CD4-positive, alpha-beta T cell (primary cell): ENCODE measurements at regions of chr17 and their contacts with region 1.

Region 1: GRCh38 chr17:8435245-8436168 is at the start of gene NDEL1:
- DNase-seq: peak; percentile 98 to 99 (median 99)
- ATAC-seq: peak; percentile 91
- H3K4me3 ChIP-seq: peak within 1 kb of the TSS; percentile 78
- H3K4me3 Mint-ChIP-seq: peak within 1 kb of the TSS; percentile 95
- H3K27ac ChIP-seq: peak within 1 kb of the TSS; percentile 97 to 98
- H3K27ac Mint-ChIP-seq: peak within 1 kb of the TSS; percentile 98
- H3K4me1 ChIP-seq: peaks cover 25% of the 10 kb centered on the region
- H3K4me1 Mint-ChIP-seq: peaks cover 44% of the 10 kb centered on the region
- H3K27me3 ChIP-seq: no peaks in the 10 kb centered on the region
- H3K27me3 Mint-ChIP-seq: no peaks in the 10 kb centered on the region
- CTCF ChIP-seq: no peak
- total RNA-seq, gene NDEL1: 300 to 313 TPM

Region 2: DNA sequence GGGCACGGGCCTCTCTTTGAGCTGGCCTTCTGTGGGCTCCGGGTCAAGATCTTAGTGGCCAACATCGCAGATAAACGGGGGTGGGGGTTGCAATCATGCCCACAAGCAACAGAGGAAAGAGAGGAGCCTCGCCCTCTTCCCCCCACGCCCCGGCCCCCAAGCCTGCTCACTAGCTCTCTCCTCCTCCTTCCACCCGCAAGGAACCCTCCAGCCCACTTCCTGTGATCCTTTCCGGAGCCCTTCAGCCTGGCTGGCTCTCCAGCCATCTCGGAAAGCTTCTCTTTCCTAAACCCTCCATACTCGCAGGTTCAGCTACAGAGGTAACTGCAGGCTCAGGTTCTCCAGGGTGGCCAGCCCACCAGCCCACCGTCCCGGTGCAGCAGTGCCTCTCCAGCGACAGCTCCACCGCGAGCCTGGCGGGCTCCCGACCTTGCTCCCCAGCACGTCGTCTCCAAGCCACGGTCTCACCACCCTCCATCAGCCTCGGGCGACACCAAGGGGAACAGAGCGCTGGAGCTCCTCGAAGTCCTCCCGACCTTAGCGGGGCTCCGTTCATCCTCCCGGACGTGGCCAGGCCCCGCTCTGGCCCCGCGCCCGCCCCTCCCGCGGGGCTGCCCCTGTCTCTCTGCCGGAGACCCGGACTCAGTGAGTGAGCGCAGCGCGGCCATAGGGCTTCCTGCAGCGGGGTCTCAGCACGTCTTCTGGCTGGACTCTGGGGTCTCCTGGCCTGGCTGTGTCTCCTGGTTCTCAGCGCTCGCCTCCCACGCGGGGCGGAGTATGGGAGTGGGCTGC is 108.8 kb before region 1 on chr17:
- CTCF ChIA-PET with region 1: no interaction called
- POLR2A ChIA-PET with region 1: no interaction called
- intact Hi-C with region 1: no loop called
- DNase-seq: peak in 11 of 14 experiments; percentile 3 to 49 (median 11)
- ATAC-seq: peak; percentile 58
- H3K4me3 ChIP-seq: peak overlapping the region; percentile 34
- H3K4me3 Mint-ChIP-seq: peak overlapping the region; percentile 45
- H3K27ac ChIP-seq: no peak overlapping the region
- H3K27ac Mint-ChIP-seq: no peak overlapping the region
- H3K4me1 ChIP-seq: peaks cover 15% of the 10 kb centered on the region
- H3K4me1 Mint-ChIP-seq: peaks cover 12% of the 10 kb centered on the region
- H3K27me3 ChIP-seq: peaks cover 34 to 42% of the 10 kb centered on the region in 2 experiments
- H3K27me3 Mint-ChIP-seq: peaks cover 65% of the 10 kb centered on the region
- CTCF ChIP-seq: no peak

Region 3: DNA sequence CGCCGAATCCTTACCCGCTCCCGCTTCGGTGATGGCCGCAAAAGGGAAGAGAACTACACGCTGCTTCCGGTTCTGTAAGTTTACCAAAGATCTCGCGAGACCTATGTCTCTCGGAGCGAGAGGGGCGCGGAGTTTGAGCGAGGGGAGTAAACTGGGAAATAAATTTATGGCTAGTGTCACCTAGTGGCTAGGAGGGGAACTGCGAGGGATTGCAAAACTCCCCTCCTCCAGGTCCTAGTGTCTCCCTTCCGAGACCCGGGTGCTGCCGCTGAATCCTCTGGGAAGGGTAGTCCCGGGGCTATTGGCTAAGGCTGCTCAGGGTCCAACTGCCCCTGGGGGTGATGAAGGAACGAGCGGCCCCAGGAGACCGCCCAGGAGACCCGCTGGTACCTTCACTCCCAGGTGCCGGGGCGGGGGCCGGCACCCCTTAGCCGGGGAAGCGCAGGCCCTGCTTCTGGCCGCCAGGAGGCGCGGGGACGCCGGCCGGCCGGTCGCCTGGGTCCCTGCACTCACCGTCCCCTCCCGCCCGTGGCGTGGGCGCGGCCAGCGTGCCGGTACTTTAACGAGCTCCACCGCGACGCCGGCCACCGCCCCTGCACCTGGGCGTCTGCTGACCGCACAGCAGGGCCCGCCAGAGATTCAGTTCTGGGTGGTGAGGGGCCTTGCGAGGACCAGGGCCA is 52.2 kb before region 1 on chr17 and contains the start of gene RPL26:
- CTCF ChIA-PET with region 1: interaction called, 8 read pairs
- POLR2A ChIA-PET with region 1: interaction called, 20 read pairs
- intact Hi-C with region 1: loop called (anchors 1 kb)
- DNase-seq: peak; percentile 89 to 98 (median 93)
- ATAC-seq: peak; percentile 86
- H3K4me3 ChIP-seq: peak within 1 kb of the TSS; percentile 95
- H3K4me3 Mint-ChIP-seq: peak within 1 kb of the TSS; percentile 95
- H3K27ac ChIP-seq: peak within 1 kb of the TSS; percentile 72 to 76
- H3K27ac Mint-ChIP-seq: peak within 1 kb of the TSS; percentile 91
- H3K4me1 ChIP-seq: peaks cover 47% of the 10 kb centered on the region
- H3K4me1 Mint-ChIP-seq: peaks cover 64% of the 10 kb centered on the region
- H3K27me3 ChIP-seq: no peaks in the 10 kb centered on the region
- H3K27me3 Mint-ChIP-seq: no peaks in the 10 kb centered on the region
- CTCF ChIP-seq: peak; percentile 100
- total RNA-seq, gene RPL26: 2,959 to 3,104 TPM

Region 4: DNA sequence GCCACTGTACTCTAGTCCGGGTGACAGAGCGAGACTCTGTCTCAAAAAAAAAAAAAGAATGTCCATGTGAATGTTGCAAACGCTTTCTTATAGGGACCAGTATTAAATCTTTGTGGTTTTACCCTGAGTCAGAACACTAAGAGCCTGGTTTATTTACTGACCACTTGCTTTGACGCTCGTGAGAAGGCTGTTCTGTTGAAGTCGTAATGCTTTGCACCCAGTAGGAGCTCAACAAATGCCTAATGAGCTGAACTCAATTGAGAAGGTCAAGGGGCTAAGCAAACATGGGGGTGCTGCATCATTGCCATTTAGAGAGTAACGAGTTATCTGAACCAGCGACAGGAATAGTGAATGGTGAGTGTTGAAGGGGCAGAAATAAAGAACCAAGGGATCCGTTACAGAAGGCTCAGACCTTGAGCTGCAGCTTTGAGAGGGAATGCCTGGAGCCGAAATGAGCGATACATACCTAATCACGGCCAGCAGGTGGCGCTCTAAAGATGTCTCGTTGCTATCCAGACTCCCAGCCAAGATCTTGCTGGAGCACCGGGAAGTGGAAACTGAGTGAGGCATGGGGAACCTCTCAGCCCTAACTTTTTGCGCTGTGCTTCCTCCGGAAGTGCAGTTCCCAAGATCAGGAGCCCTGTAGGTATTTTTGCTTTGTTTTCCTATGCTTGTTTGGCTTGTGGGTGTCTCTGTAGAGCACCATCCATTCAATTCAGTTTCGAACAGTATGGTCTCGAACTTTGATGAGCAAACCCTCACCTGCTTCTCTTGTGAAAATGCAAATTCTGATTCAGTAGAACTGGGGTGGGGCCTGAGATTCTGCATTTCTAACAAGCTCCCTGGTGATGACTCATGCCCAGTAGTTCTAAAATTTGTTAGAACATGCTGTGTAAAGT is 25.3 kb before region 1 on chr17:
- CTCF ChIA-PET with region 1: interaction called, 6 read pairs
- POLR2A ChIA-PET with region 1: interaction called, 6 read pairs
- intact Hi-C with region 1: loop called in 1 of 2 experiments (anchors 2 kb)
- DNase-seq: peak; percentile 65 to 91 (median 75)
- ATAC-seq: peak; percentile 85
- H3K4me3 ChIP-seq: no peak overlapping the region
- H3K4me3 Mint-ChIP-seq: no peak overlapping the region
- H3K27ac ChIP-seq: no peak overlapping the region
- H3K27ac Mint-ChIP-seq: no peak overlapping the region
- H3K4me1 ChIP-seq: peaks cover 16% of the 10 kb centered on the region
- H3K4me1 Mint-ChIP-seq: peaks cover 10% of the 10 kb centered on the region
- H3K27me3 ChIP-seq: peaks cover 0 to 7% of the 10 kb centered on the region in 2 experiments
- H3K27me3 Mint-ChIP-seq: peaks cover 9% of the 10 kb centered on the region
- CTCF ChIP-seq: peak; percentile 96

Region 5: GRCh38 chr17:8954339-8954738 is 518.8 kb after region 1 on chr17:
- CTCF ChIA-PET with region 1: no interaction called
- POLR2A ChIA-PET with region 1: no interaction called
- intact Hi-C with region 1: loop called in 1 of 2 experiments (anchors 10 kb)
- DNase-seq: peak; percentile 62 to 95 (median 76)
- ATAC-seq: peak; percentile 94
- H3K4me3 ChIP-seq: peak overlapping the region; percentile 19
- H3K4me3 Mint-ChIP-seq: peak overlapping the region; percentile 80
- H3K27ac ChIP-seq: peak overlapping the region; percentile 66 to 77
- H3K27ac Mint-ChIP-seq: peak overlapping the region; percentile 92
- H3K4me1 ChIP-seq: peaks cover 80% of the 10 kb centered on the region
- H3K4me1 Mint-ChIP-seq: peaks cover 94% of the 10 kb centered on the region
- H3K27me3 ChIP-seq: no peaks in the 10 kb centered on the region
- H3K27me3 Mint-ChIP-seq: no peaks in the 10 kb centered on the region
- CTCF ChIP-seq: no peak

Region 6: GRCh38 chr17:9575381-9576101 is 1140.0 kb after region 1 on chr17 and contains the start of gene STX8:
- CTCF ChIA-PET with region 1: no interaction called
- POLR2A ChIA-PET with region 1: no interaction called
- intact Hi-C with region 1: loop called in 1 of 2 experiments (anchors 10 kb)
- DNase-seq: peak; percentile 59 to 83 (median 70)
- ATAC-seq: peak; percentile 68
- H3K4me3 ChIP-seq: peak within 1 kb of the TSS; percentile 91
- H3K4me3 Mint-ChIP-seq: peak within 1 kb of the TSS; percentile 99
- H3K27ac ChIP-seq: peak within 1 kb of the TSS in 1 of 2 donors; percentile 29
- H3K27ac Mint-ChIP-seq: peak within 1 kb of the TSS; percentile 65
- H3K4me1 ChIP-seq: peaks cover 14% of the 10 kb centered on the region
- H3K4me1 Mint-ChIP-seq: peaks cover 42% of the 10 kb centered on the region
- H3K27me3 ChIP-seq: no peaks in the 10 kb centered on the region
- H3K27me3 Mint-ChIP-seq: no peaks in the 10 kb centered on the region
- CTCF ChIP-seq: no peak
- total RNA-seq, gene STX8: 52.2 to 63.2 TPM